Left colon (tissue), 2 donors: ENCODE measurements at regions of chr10 and their contacts with region 1.

Region 1: GRCh38 chr10:94320285-94320914 is 42.3 kb downstream of the NOC3L start:
- DNase-seq: peak; percentile 38 to 79
- ATAC-seq: peak; percentile 70

Region 2: GRCh38 chr10:93916257-93917063 is 403.9 kb before region 1 on chr10:
- intact Hi-C with region 1: loop called in 1 of 2 experiments (anchors 2 kb)
- DNase-seq: no peak
- ATAC-seq: peak; percentile 90